ENCODE measurements at regions of chr4 and their contacts with region 1.

Region 1: DNA sequence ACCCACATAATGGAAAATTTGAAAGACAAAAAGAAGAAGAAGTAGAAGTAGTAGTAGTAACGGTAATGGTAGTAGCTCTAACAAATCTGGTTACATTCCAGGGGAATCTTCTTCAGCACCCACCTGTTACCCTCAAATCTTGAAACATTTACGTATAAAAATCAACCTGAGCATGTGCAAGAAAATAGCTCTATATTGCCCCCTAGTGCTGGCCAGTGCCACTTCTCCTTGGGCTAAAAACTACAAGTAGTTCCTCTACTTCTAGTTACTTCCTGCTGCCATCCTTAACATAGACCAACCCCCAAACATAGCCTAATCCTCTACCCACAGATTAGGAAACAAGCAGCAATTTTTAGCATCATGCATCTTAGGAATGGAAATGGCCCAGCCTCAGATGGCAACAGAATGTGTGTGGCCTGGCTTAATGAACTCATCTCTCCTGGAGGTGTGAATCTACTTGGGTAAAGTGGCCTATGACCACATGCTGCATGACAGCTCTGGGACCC is 3.1 kb downstream of the PDGFC start:
- DNase-seq: peak; percentile 90
- H3K4me3 ChIP-seq: peak overlapping the region; percentile 82
- H3K27ac ChIP-seq: peak overlapping the region; percentile 83
- H3K4me1 ChIP-seq: peaks cover 23% of the 10 kb centered on the region
- H3K27me3 ChIP-seq: no peaks in the 10 kb centered on the region
- CTCF ChIP-seq: peak; percentile 94

Region 2: DNA sequence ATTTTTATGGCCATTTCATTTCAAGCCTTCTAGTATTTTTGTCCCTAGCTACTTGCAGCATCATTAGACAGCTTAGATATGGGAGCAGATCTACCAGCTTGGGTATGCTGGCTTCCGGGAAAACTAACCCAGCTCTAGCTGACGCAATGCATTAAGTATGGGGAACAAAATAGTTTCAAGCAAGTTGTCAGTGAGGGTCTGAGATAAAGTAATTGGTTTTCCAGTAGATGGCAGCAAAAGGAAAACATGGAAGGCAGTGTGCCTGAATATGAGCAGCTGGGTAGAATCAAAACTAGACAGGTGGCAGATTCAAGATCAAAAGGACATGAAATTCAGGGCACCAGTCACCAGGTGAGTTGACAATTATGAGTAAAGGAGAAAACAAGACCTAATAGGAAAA is 674.0 kb before region 1 on chr4:
- CTCF ChIA-PET with region 1: interaction called, 3 read pairs
- POLR2A ChIA-PET with region 1: no interaction called
- intact Hi-C with region 1: loop called (anchors 2 kb)
- DNase-seq: peak; percentile 93
- H3K4me3 ChIP-seq: no peak overlapping the region
- H3K27ac ChIP-seq: peak overlapping the region; percentile 74
- H3K4me1 ChIP-seq: peaks cover 40% of the 10 kb centered on the region
- H3K27me3 ChIP-seq: no peaks in the 10 kb centered on the region
- CTCF ChIP-seq: peak; percentile 74

Region 3: GRCh38 chr4:156594624-156595023 is 373.9 kb before region 1 on chr4:
- CTCF ChIA-PET with region 1: no interaction called
- POLR2A ChIA-PET with region 1: no interaction called
- intact Hi-C with region 1: loop called (anchors 5 kb)
- DNase-seq: peak; percentile 77
- H3K4me3 ChIP-seq: no peak overlapping the region
- H3K27ac ChIP-seq: no peak overlapping the region
- H3K4me1 ChIP-seq: peaks cover 52% of the 10 kb centered on the region
- H3K27me3 ChIP-seq: no peaks in the 10 kb centered on the region
- CTCF ChIP-seq: no peak

Region 4: DNA sequence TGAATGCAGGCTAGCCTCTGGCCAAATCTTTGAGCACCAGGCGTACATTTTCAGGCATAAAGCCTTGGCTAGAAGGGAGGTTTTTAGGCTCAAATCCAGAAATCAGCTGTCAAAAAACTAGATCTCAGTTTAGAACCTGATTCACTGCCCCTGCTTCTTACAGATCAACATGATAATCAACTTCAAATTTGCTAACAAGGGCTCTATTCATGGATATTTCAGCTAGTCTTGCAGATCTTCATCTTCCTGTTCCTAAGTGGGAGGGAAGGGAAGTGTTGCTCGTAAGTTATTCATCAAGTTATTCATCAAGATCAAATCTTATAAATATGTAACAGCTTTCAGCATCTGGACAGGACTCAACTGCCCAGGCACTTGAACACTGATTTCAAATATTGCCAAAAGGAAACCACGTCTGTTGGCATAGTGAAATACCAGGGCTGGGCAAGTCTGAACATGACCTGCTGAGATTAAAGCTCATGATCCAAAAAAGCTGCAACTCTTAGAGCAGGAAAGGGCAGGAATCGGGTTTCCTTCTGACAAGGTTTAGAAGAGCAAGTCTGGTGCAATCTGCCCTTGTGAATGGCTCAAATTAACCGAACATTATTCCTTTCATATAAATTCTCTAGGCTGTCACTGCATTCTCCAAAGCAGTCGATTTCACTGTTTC is 197.2 kb before region 1 on chr4:
- CTCF ChIA-PET with region 1: no interaction called
- POLR2A ChIA-PET with region 1: no interaction called
- intact Hi-C with region 1: loop called (anchors 5 kb)
- DNase-seq: peak; percentile 96
- H3K4me3 ChIP-seq: peak overlapping the region; percentile 18
- H3K27ac ChIP-seq: peak overlapping the region; percentile 78
- H3K4me1 ChIP-seq: peaks cover 71% of the 10 kb centered on the region
- H3K27me3 ChIP-seq: no peaks in the 10 kb centered on the region
- CTCF ChIP-seq: no peak

Region 5: GRCh38 chr4:157014621-157015591 is 46.4 kb after region 1 on chr4:
- CTCF ChIA-PET with region 1: no interaction called
- POLR2A ChIA-PET with region 1: no interaction called
- intact Hi-C with region 1: no loop called
- DNase-seq: no peak
- H3K4me3 ChIP-seq: no peak overlapping the region
- H3K27ac ChIP-seq: no peak overlapping the region
- H3K4me1 ChIP-seq: peaks cover 37% of the 10 kb centered on the region
- H3K27me3 ChIP-seq: no peaks in the 10 kb centered on the region
- CTCF ChIP-seq: no peak

Region 6: GRCh38 chr4:157045507-157046127 is 77.1 kb after region 1 on chr4:
- CTCF ChIA-PET with region 1: interaction called, 9 read pairs
- POLR2A ChIA-PET with region 1: no interaction called
- intact Hi-C with region 1: loop called (anchors 1 kb)
- DNase-seq: peak; percentile 86
- H3K4me3 ChIP-seq: no peak overlapping the region
- H3K27ac ChIP-seq: no peak overlapping the region
- H3K4me1 ChIP-seq: peaks cover 19% of the 10 kb centered on the region
- H3K27me3 ChIP-seq: no peaks in the 10 kb centered on the region
- CTCF ChIP-seq: peak; percentile 89

Region 7: GRCh38 chr4:157978680-157979361 is 1010.3 kb after region 1 on chr4:
- CTCF ChIA-PET with region 1: no interaction called
- POLR2A ChIA-PET with region 1: no interaction called
- intact Hi-C with region 1: loop called (anchors 10 kb)
- DNase-seq: peak; percentile 89
- H3K4me3 ChIP-seq: peak overlapping the region; percentile 23
- H3K27ac ChIP-seq: no peak overlapping the region
- H3K4me1 ChIP-seq: peaks cover 22% of the 10 kb centered on the region
- H3K27me3 ChIP-seq: no peaks in the 10 kb centered on the region
- CTCF ChIP-seq: peak; percentile 85

Measured in A673 (cell line).